ENCODE measurements at regions of chr7 and their contacts with region 1.

Region 1: GRCh38 chr7:111138196-111138569 is 47.3 kb downstream of the LRRN3 start:
- DNase-seq: peak; percentile 86
- H3K4me3 Mint-ChIP-seq: peak overlapping the region; percentile 76
- H3K27ac Mint-ChIP-seq: peak overlapping the region; percentile 96
- H3K4me1 Mint-ChIP-seq: peaks cover 23% of the 10 kb centered on the region
- H3K27me3 Mint-ChIP-seq: no peaks in the 10 kb centered on the region

Region 2: GRCh38 chr7:110813986-110814385 is 324.2 kb before region 1 on chr7:
- intact Hi-C with region 1: no loop called
- DNase-seq: no peak
- H3K4me3 Mint-ChIP-seq: no peak overlapping the region
- H3K27ac Mint-ChIP-seq: no peak overlapping the region
- H3K4me1 Mint-ChIP-seq: peaks cover 1% of the 10 kb centered on the region
- H3K27me3 Mint-ChIP-seq: no peaks in the 10 kb centered on the region

Region 3: GRCh38 chr7:111113263-111114017 is 24.7 kb before region 1 on chr7:
- intact Hi-C with region 1: loop called (anchors 1 kb)
- DNase-seq: no peak
- H3K4me3 Mint-ChIP-seq: peak overlapping the region; percentile 37
- H3K27ac Mint-ChIP-seq: peak overlapping the region; percentile 70
- H3K4me1 Mint-ChIP-seq: peaks cover 49% of the 10 kb centered on the region
- H3K27me3 Mint-ChIP-seq: no peaks in the 10 kb centered on the region

Region 4: GRCh38 chr7:111232249-111233084 is 94.3 kb after region 1 on chr7:
- intact Hi-C with region 1: loop called (anchors 1 kb)
- DNase-seq: no peak
- H3K4me3 Mint-ChIP-seq: no peak overlapping the region
- H3K27ac Mint-ChIP-seq: no peak overlapping the region
- H3K4me1 Mint-ChIP-seq: peaks cover 11% of the 10 kb centered on the region
- H3K27me3 Mint-ChIP-seq: no peaks in the 10 kb centered on the region